ENCODE measurements at regions of chr16 and their contacts with region 1.

Region 1: GRCh38 chr16:66552286-66553177 is at the start of gene CKLF:
- DNase-seq: peak; percentile 88 to 92
- ATAC-seq: peak; percentile 85 to 95 (median 89)
- H3K4me3 ChIP-seq: peak within 1 kb of the TSS; percentile 33 to 89 (median 60)
- H3K27ac ChIP-seq: peak within 1 kb of the TSS; percentile 89 to 100 (median 96)
- H3K4me1 ChIP-seq: peaks cover 5 to 77% (median 57%) of the 10 kb centered on the region in 9 donors
- H3K27me3 ChIP-seq: no peaks in the 10 kb centered on the region
- CTCF ChIP-seq: no peak
- total RNA-seq, gene CKLF: 1.6 to 19.9 (median 6.7) TPM

Region 2: DNA sequence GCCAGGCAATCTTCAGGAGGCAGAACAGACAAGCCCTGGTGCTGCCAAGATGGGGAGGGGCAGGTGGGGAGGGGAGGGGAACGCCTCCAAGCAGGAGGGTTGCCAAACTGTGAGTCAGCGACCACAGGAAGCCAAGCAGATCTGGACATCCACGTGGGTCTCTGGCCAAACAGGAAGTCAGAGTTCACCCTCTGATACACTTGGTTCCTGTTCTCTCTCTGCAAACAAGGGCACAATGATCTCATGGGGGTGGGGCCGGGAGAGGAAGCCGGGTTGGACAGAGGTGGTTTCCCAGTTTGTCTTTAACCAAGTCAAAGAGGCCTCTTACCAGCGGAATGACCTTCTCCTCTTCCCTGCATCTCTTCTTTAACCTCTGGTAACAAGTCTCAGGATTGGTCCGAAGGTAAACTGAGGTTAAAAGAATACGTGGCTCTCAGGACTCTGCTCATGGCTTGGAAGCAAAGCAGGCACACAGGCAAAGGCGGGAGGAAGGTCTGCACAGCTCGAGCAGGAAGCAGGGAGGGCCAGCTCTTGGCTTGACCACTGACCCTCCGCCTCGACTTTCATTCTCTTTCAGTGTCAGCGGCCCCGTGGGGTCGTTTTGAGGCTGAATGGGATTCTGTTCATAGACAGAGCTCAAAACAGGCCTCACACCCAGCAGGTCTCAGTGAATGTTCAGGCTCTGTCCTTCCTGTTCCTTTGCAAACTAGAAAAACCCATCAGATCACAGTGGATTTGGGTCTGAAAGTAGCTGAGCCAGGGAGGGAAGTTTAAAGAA is 35.5 kb before region 1 on chr16:
- intact Hi-C with region 1: loop called in 5 of 10 experiments (anchors 2 to 5 kb)
- DNase-seq: peak; percentile 96 to 99
- ATAC-seq: peak; percentile 89 to 97 (median 95)
- H3K4me3 ChIP-seq: peak overlapping the region in 8 of 10 donors; percentile 12 to 47 (median 31)
- H3K27ac ChIP-seq: peak overlapping the region; percentile 93 to 100 (median 98)
- H3K4me1 ChIP-seq: peaks cover 19 to 91% (median 76%) of the 10 kb centered on the region in 9 donors
- H3K27me3 ChIP-seq: no peaks in the 10 kb centered on the region
- CTCF ChIP-seq: no peak

Region 3: DNA sequence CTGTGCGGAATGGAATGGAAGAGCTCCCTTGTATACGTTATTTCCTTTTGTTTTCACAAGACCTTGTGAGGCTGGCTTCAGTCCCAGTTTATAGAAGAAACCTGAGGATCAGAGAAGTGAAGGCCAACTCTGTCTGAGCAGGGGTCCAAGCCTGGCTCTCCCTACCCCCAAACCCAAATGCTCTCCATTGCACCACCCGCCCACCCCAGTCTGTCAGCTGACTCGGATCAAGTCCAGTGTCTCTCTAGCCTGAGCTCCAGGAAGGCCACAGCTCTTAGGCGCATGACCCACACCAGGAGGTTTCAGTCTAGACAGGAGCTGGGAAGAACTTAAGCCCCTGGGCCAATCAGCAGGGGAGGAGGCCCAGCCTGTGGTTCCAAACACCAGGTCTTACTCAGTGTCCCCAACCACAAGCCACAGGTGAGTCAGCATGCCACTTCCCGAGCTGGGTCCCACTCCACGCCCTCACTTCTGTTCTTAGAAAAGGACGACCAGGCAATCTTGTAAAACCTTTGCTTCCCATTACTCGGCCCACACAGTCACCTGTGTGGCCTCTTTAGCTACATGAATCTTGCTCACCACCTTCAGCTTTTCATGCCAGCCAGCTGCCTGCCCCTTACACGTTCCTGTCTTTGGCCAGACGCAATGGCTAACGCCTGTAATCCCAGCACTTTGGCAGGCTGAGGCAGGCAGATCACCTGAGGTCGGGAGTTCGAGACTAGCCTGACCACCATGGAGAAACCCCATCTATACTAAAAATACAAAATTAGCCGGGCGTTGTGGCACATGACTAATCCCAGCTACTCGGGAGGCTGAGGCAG is 30.4 kb before region 1 on chr16:
- intact Hi-C with region 1: loop called in 6 of 10 experiments (anchors 1 to 5 kb)
- DNase-seq: no peak
- ATAC-seq: peak in 1 of 8 donors; percentile 6
- H3K4me3 ChIP-seq: no peak overlapping the region
- H3K27ac ChIP-seq: peak overlapping the region in 6 of 10 donors; percentile 41 to 100 (median 98)
- H3K4me1 ChIP-seq: peaks cover 15 to 99% (median 74%) of the 10 kb centered on the region in 9 donors
- H3K27me3 ChIP-seq: no peaks in the 10 kb centered on the region
- CTCF ChIP-seq: no peak

Region 4: GRCh38 chr16:66578651-66579531 is 26.4 kb after region 1 on chr16 and contains the start of gene CMTM2:
- intact Hi-C with region 1: no loop called
- DNase-seq: no peak
- ATAC-seq: peak in 5 of 8 donors; percentile 12 to 47 (median 37)
- H3K4me3 ChIP-seq: peak within 1 kb of the TSS; percentile 3 to 49 (median 42)
- H3K27ac ChIP-seq: no peak within 1 kb of the TSS
- H3K4me1 ChIP-seq: peaks cover 5 to 38% (median 24%) of the 10 kb centered on the region in 9 donors
- H3K27me3 ChIP-seq: peaks cover 0 to 29% (median 18%) of the 10 kb centered on the region in 7 donors
- CTCF ChIP-seq: no peak
- total RNA-seq, gene CMTM2: 0.33 to 0.95 (median 0.63) TPM in 4 of 10 donors, not detected in the others

Measured in heart right ventricle (tissue), 16 donors.